CD8-positive, alpha-beta memory T cell (primary cell): ENCODE measurements at regions of chr15 and their contacts with region 1.

Region 1: GRCh38 chr15:31365655-31366127 is 39.1 kb downstream of the KLF13 start:
- DNase-seq: peak; percentile 67 to 88 (median 82)
- H3K4me3 ChIP-seq: no peak overlapping the region
- H3K4me3 Mint-ChIP-seq: peak overlapping the region; percentile 70 to 95 (median 86)
- H3K27ac ChIP-seq: peak overlapping the region; percentile 33
- H3K27ac Mint-ChIP-seq: peak overlapping the region; percentile 90 to 99 (median 97)
- H3K4me1 ChIP-seq: peaks cover 99% of the 10 kb centered on the region
- H3K4me1 Mint-ChIP-seq: peaks cover 96 to 100% (median 98%) of the 10 kb centered on the region in 3 donors
- H3K27me3 ChIP-seq: no peaks in the 10 kb centered on the region
- H3K27me3 Mint-ChIP-seq: peaks cover 0 to 5% of the 10 kb centered on the region in 2 donors

Region 2: DNA sequence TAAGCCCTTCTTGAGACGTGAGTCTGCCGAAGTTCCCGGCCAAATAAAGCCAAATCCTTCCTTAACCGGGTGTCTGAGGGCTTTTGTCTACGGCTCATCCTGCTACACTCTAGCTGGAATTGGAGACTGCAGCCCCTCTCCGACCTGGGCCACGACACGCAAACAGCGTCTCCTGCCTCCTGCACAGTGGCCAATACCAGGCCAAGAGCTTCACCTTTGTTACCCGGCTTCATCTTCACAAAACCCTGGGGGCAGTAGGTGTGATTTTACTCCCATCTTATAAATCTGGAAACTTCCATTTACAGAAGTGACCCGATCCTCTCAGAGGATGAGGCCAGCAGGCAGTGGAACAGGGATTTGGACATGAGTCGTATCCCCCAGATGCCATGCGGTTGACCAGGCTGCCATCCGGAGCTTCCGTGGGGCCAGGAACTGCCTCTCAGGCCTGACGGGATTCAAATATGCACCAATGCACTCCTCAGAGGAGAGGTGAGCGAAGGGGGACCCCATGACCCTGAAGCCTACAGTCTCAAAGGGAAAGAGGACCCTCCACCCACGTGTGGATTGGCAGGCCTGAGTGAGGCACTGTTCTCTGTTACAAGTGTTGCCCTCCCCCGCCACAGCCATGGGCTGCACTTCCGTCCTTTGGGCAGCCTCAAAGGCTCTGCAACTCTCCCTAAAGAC is 92.3 kb before region 1 on chr15:
- CTCF ChIA-PET with region 1: no interaction called
- POLR2A ChIA-PET with region 1: no interaction called
- DNase-seq: peak in 1 of 5 donors; percentile 38
- H3K4me3 ChIP-seq: no peak overlapping the region
- H3K4me3 Mint-ChIP-seq: no peak overlapping the region
- H3K27ac ChIP-seq: no peak overlapping the region
- H3K27ac Mint-ChIP-seq: peak overlapping the region in 1 of 8 donors; percentile 74
- H3K4me1 ChIP-seq: peaks cover 16% of the 10 kb centered on the region
- H3K4me1 Mint-ChIP-seq: peaks cover 3 to 35% (median 13%) of the 10 kb centered on the region in 3 donors
- H3K27me3 ChIP-seq: no peaks in the 10 kb centered on the region
- H3K27me3 Mint-ChIP-seq: no peaks in the 10 kb centered on the region

Region 3: DNA sequence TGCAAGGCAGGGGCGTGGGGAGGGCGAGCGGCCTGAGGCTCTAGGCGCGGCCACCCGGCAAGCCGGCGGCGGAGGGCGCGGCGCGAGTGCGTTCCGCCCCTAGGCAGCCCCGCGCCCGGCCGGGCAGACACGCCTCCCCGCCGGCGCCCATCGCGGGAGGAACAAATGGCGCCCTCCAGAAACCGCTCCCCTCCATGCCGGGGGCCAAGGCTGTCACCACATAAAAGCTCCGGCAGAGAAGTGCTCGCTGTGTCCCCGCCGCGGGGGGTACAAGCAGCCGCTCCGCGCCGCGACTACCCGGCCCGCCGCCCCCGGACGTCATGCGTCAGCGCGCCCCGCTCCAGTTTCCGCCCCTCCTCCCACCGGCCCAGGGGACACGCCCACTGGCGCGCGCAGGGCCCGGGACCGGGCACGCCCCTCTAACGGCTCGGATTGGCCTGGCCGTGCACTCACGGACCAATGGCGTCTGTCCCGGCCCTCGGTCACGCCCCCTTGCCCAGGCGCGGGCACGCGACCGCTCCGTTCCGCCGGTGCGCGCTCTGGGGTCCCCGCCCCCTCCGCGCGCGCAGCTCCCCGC is 39.4 kb before region 1 on chr15:
- CTCF ChIA-PET with region 1: interaction called, 31 read pairs
- POLR2A ChIA-PET with region 1: interaction called, 62 read pairs
- DNase-seq: peak; percentile 99 to 100 (median 100)
- H3K4me3 ChIP-seq: peak overlapping the region; percentile 52
- H3K4me3 Mint-ChIP-seq: peak overlapping the region; percentile 58 to 95 (median 87)
- H3K27ac ChIP-seq: peak overlapping the region; percentile 85
- H3K27ac Mint-ChIP-seq: peak overlapping the region; percentile 46 to 96 (median 76)
- H3K4me1 ChIP-seq: peaks cover 35% of the 10 kb centered on the region
- H3K4me1 Mint-ChIP-seq: peaks cover 37 to 65% (median 42%) of the 10 kb centered on the region in 3 donors
- H3K27me3 ChIP-seq: no peaks in the 10 kb centered on the region
- H3K27me3 Mint-ChIP-seq: peaks cover 0 to 2% of the 10 kb centered on the region in 2 donors

Region 4: GRCh38 chr15:31338879-31339557 is 26.7 kb before region 1 on chr15:
- CTCF ChIA-PET with region 1: interaction called, 42 read pairs
- POLR2A ChIA-PET with region 1: interaction called, 145 read pairs
- DNase-seq: peak in 3 of 5 donors; percentile 32 to 65 (median 40)
- H3K4me3 ChIP-seq: peak overlapping the region; percentile 36
- H3K4me3 Mint-ChIP-seq: peak overlapping the region; percentile 63 to 82 (median 71)
- H3K27ac ChIP-seq: peak overlapping the region; percentile 1
- H3K27ac Mint-ChIP-seq: peak overlapping the region; percentile 85 to 96 (median 90)
- H3K4me1 ChIP-seq: peaks cover 98% of the 10 kb centered on the region
- H3K4me1 Mint-ChIP-seq: peaks cover 96 to 100% (median 97%) of the 10 kb centered on the region in 3 donors
- H3K27me3 ChIP-seq: no peaks in the 10 kb centered on the region
- H3K27me3 Mint-ChIP-seq: no peaks in the 10 kb centered on the region

Region 5: DNA sequence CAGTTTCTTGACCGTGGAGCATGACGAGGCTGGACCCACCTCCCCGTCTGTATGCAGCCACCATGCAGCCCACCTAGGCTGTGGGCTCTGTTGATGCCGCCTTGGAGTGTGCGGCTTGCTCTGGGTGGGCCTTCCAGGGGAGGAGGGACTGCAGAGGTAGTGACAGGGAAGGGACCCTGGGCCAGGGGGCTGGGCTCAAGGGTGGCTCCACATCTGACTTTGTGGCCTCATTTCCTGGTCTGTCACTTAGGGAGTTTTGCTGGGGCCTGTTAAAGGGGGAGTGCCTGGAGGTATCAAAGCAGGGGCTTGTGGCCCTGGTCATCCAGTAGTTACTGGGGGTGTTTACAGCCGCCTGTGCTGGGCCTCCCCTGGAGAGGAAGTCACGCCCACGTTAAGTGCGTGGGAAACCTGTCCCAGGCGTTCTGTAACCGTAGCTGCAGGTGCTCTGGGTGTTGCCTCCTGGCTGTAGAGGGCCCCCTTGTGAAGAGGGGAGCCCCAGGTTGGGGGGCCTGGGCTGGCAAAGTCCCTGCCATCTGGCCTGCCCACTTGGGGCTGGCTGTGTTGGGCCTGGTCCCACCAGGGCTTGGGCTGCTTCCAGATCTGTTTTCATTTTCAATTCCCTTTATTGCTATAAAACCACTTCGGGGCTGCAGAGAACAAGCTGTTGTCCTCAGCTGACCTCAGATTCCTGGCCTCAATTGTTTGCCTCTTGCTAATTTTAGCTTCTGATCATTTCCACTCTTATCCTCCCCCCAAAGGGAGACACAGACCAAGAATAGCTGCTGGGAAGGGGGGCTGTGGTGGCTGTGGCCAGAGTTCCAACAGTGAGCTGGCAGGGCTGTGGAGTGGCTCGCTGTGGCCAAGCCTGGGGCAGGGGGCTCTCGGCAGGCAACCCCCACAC is 12.5 kb before region 1 on chr15:
- CTCF ChIA-PET with region 1: interaction called, 224 read pairs
- POLR2A ChIA-PET with region 1: interaction called, 145 read pairs
- DNase-seq: peak; percentile 37 to 71 (median 67)
- H3K4me3 ChIP-seq: peak overlapping the region; percentile 33
- H3K4me3 Mint-ChIP-seq: peak overlapping the region; percentile 73 to 87 (median 82)
- H3K27ac ChIP-seq: peak overlapping the region; percentile 67
- H3K27ac Mint-ChIP-seq: peak overlapping the region; percentile 90 to 98 (median 96)
- H3K4me1 ChIP-seq: peaks cover 100% of the 10 kb centered on the region
- H3K4me1 Mint-ChIP-seq: peaks cover 96 to 99% (median 98%) of the 10 kb centered on the region in 3 donors
- H3K27me3 ChIP-seq: no peaks in the 10 kb centered on the region
- H3K27me3 Mint-ChIP-seq: peaks cover 0 to 1% of the 10 kb centered on the region in 2 donors

Region 6: GRCh38 chr15:31385736-31386135 is 20.0 kb after region 1 on chr15:
- CTCF ChIA-PET with region 1: interaction called, 29 read pairs
- POLR2A ChIA-PET with region 1: interaction called, 15 read pairs
- DNase-seq: no peak
- H3K4me3 ChIP-seq: no peak overlapping the region
- H3K4me3 Mint-ChIP-seq: peak overlapping the region; percentile 4 to 85 (median 77)
- H3K27ac ChIP-seq: no peak overlapping the region
- H3K27ac Mint-ChIP-seq: peak overlapping the region in 7 of 8 donors; percentile 84 to 96 (median 95)
- H3K4me1 ChIP-seq: peaks cover 58% of the 10 kb centered on the region
- H3K4me1 Mint-ChIP-seq: peaks cover 74 to 88% (median 82%) of the 10 kb centered on the region in 3 donors
- H3K27me3 ChIP-seq: no peaks in the 10 kb centered on the region
- H3K27me3 Mint-ChIP-seq: peaks cover 0 to 1% of the 10 kb centered on the region in 2 donors

Region 7: DNA sequence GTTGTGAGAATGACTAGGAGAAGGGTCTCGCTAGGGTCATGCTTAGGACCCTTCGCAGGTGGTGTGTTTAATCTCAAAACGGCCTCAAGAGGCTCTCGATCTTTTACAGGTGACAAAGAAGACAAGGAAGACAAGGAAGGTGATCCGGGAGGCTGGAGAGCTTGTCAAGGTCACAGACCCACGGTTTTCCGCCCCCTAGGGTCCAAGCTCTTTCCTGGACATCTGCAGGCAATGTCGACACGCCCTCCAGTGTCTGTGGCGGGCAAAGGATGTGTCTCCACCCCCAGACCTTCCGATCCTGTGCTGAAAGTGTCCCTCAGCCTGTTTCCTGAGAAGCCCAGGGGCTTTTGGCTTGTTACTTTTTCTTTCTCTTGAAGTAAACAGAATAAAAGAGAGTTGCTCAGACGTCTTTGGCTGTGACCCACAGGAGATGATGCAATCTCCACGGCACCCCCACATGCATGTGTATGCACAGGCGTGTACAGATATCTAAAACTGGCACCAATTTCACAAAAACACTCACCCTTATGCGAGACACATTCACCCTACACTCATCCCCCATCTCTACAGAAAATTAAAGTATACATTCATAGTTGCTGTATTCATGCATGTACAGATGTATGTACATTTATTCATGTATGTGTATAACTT is 69.7 kb after region 1 on chr15:
- CTCF ChIA-PET with region 1: interaction called, 131 read pairs
- POLR2A ChIA-PET with region 1: interaction called, 30 read pairs
- DNase-seq: peak; percentile 67 to 93 (median 88)
- H3K4me3 ChIP-seq: peak overlapping the region; percentile 72
- H3K4me3 Mint-ChIP-seq: peak overlapping the region; percentile 69 to 89 (median 86)
- H3K27ac ChIP-seq: peak overlapping the region; percentile 92
- H3K27ac Mint-ChIP-seq: peak overlapping the region; percentile 94 to 100 (median 98)
- H3K4me1 ChIP-seq: peaks cover 73% of the 10 kb centered on the region
- H3K4me1 Mint-ChIP-seq: peaks cover 73 to 84% (median 75%) of the 10 kb centered on the region in 3 donors
- H3K27me3 ChIP-seq: no peaks in the 10 kb centered on the region
- H3K27me3 Mint-ChIP-seq: no peaks in the 10 kb centered on the region

Region 8: GRCh38 chr15:31448635-31448979 is 82.9 kb after region 1 on chr15:
- CTCF ChIA-PET with region 1: no interaction called
- POLR2A ChIA-PET with region 1: no interaction called
- DNase-seq: no peak
- H3K4me3 ChIP-seq: no peak overlapping the region
- H3K4me3 Mint-ChIP-seq: no peak overlapping the region
- H3K27ac ChIP-seq: no peak overlapping the region
- H3K27ac Mint-ChIP-seq: peak overlapping the region in 2 of 8 donors; percentile 8 to 29
- H3K4me1 ChIP-seq: peaks cover 7% of the 10 kb centered on the region
- H3K4me1 Mint-ChIP-seq: peaks cover 14 to 17% (median 16%) of the 10 kb centered on the region in 3 donors
- H3K27me3 ChIP-seq: no peaks in the 10 kb centered on the region
- H3K27me3 Mint-ChIP-seq: no peaks in the 10 kb centered on the region